Upper lobe of right lung (tissue), 1 donor: ENCODE measurements at regions of chr1 and their contacts with region 1.

Region 1: GRCh38 chr1:47997289-47998200 is at the start of gene TRABD2B:
- DNase-seq: peak; percentile 89
- ATAC-seq: peak; percentile 95
- H3K4me3 ChIP-seq: peak within 1 kb of the TSS; percentile 50
- H3K27ac ChIP-seq: no peak within 1 kb of the TSS
- H3K4me1 ChIP-seq: peaks cover 4% of the 10 kb centered on the region
- H3K27me3 ChIP-seq: peaks cover 24% of the 10 kb centered on the region
- CTCF ChIP-seq: peak; percentile 93
- total RNA-seq, gene TRABD2B: 1.2 TPM

Region 2: GRCh38 chr1:48061162-48062136 is 63.9 kb after region 1 on chr1:
- intact Hi-C with region 1: loop called (anchors 10 kb)
- DNase-seq: no peak
- ATAC-seq: peak; percentile 72
- H3K4me3 ChIP-seq: no peak overlapping the region
- H3K27ac ChIP-seq: no peak overlapping the region
- H3K4me1 ChIP-seq: no peaks in the 10 kb centered on the region
- H3K27me3 ChIP-seq: no peaks in the 10 kb centered on the region
- CTCF ChIP-seq: peak; percentile 63

Region 3: DNA sequence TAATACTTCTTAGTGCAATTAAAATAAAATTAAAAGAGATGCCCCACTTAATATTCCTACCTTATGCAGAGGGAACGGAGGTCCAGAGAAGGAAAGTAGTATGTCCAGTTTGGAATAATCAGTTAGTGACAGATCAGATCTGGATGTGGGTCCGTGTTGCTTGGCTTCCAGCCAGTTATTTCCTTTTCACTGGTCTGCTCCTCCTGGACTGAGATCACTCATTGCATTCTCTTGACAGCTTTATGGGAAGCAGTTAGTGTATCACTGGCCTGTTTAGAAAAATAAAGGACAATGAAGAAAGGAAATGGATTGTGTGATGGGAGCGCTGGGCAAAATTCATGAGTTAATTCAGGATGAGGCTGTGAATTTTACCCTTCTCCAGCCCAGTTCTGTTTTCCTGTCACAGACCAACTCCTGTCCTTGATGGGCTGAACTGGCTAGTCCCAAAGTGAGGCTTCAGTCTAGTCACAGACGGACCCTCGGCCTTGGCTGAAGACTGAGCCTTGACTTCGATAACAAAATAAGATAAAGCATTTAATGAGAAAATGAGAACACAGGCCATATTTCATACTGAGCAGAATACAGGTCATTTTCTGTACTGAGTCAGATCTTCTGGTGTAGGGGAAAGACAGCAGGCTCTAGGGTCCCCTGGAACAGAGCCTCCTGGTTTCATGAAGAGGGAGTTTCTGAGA is 84.9 kb after region 1 on chr1:
- intact Hi-C with region 1: no loop called
- DNase-seq: no peak
- ATAC-seq: no peak
- H3K4me3 ChIP-seq: no peak overlapping the region
- H3K27ac ChIP-seq: no peak overlapping the region
- H3K4me1 ChIP-seq: peaks cover 4% of the 10 kb centered on the region
- H3K27me3 ChIP-seq: peaks cover 6% of the 10 kb centered on the region
- CTCF ChIP-seq: no peak

Region 4: DNA sequence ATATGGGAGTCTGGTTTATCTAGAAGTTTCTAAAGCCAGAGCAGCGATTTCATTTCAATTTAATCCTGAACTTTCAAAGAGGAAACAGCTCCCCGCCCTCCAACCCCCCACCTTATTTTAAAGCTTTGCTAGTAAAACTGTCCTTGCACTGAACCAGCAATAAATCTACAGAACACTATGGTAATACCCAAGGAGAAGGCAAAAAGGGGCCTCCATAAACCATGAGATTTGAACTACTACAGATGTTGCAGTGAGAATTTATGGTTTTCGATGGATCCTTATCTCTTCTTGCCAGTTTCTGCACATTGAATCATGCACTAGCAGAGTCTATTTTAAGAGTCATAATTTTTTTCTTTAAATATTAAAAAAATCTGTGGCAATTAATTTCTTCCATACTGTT is 843.9 kb after region 1 on chr1:
- intact Hi-C with region 1: no loop called
- DNase-seq: no peak
- ATAC-seq: no peak
- H3K4me3 ChIP-seq: no peak overlapping the region
- H3K27ac ChIP-seq: no peak overlapping the region
- H3K4me1 ChIP-seq: no peaks in the 10 kb centered on the region
- H3K27me3 ChIP-seq: peaks cover 4% of the 10 kb centered on the region
- CTCF ChIP-seq: no peak